ENCODE measurements at regions of chr11 and their contacts with region 1.

Region 1: DNA sequence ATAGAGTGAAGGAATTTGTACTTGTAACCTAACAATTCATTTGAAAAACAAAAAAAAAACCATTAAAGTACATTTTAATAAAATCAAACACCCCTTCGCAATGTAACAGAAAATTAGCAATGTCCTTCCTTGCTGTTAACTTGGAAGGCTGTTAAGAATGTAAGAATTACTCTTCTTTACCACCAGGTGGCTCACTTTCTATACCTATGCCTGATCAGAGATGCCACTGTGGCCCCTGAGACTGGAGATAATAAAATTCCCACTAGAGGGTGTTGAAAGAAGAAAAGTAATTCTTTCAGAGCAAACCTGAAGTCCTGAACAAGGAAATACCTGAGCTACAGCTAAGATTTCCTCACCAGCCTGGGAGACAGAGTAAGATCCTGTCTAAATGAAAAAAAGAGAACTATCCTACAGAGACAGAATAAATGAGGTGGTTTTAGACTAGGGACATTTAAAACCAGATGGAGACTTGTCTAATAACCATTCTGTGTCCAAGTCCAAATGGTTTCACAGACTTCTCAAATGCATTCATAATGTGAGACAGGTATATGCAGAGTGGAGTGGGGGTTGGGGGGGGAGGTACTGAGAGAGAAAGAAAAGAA is 1089.3 kb downstream of the FAM181B start:
- DNase-seq: no peak
- ATAC-seq: peak in 3 of 4 donors; percentile 69 to 76 (median 73)
- H3K4me3 ChIP-seq: no peak overlapping the region
- H3K27ac ChIP-seq: no peak overlapping the region
- H3K4me1 ChIP-seq: no peaks in the 10 kb centered on the region
- H3K27me3 ChIP-seq: no peaks in the 10 kb centered on the region
- CTCF ChIP-seq: peak; percentile 37 to 59 (median 48)

Region 2: DNA sequence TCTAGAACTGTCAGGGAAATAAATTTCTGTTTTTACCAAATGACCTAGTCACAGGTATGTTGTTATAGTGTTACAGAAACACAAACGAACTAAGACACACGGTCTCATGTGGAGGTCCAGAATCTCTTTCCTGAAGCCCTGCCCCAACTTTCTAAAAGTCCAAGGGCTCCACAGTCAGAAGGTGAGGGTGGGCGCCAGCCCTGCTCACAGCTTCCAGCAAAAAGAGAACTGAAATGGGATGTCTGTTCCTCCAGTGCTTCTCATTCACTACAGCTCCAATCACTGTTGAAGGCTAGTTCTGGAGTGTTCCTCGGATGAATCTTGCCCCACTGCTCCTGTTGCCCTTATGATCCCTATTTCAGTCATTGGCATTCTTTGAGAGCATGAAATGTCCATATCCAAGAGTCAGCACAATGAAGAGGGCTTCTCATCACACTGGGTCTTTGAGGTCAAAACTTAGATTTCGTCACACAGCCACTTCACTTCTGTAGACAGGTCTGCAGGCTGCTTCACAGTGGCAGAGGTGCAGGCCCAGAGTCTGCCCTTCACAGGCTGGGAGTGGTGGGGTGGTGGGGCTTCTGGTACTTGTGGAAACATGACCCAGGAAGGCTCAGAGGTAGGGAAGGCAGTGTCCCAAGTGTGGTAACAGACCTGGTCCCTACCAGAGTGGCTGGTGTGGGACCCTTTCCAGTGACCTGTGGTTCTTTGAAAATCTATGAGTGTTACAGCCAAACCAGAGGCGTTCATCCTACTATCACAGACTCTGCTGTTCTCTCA is 1054.4 kb after region 1 on chr11:
- intact Hi-C with region 1: loop called in 1 of 3 experiments (anchors 10 kb)
- DNase-seq: no peak
- ATAC-seq: no peak
- H3K4me3 ChIP-seq: no peak overlapping the region
- H3K27ac ChIP-seq: no peak overlapping the region
- H3K4me1 ChIP-seq: no peaks in the 10 kb centered on the region
- H3K27me3 ChIP-seq: peaks cover 0 to 6% (median 0%) of the 10 kb centered on the region in 4 donors
- CTCF ChIP-seq: no peak

Measured in pancreas (tissue), 10 donors.